AG04449 (cell line): ENCODE measurements at regions of chr9 and their contacts with region 1.

Region 1: GRCh38 chr9:20941174-20941690 is 90.2 kb downstream of the HACD4 start:
- DNase-seq: no peak
- H3K4me3 ChIP-seq: no peak overlapping the region
- CTCF ChIP-seq: peak; percentile 72

Region 2: DNA sequence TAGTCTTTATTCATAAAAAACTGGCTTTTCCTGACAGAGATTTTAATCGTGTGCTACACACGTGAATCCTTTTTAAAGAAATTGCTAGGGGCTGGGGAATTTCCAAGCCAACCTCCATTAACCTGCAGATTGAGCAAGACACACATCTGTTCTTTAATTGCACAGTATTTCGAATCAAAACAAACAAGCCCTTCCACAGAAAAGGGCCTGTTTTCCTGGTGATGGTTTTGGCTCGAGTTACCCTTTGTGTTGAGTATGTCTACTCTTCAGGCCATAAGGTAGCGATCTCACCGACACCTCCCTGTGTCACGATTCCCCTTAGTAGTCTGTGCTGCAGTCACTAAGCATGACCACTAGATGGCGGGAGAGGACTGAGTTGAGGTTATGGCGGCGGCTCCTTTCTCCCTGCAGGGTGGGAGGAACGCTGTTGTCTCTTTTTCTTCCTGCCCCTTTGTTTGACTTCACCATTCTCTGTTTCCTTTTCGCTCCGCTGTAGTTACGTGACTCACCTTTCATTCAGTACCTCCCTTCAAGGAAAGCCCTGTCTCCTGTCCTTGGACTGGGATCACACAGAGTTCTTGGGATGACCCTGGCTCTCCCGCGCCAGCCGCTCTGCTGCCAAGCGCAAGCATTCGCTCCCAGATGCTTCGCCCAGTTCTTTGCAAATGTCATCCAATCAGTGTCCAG is 1015.3 kb before region 1 on chr9:
- CTCF ChIA-PET with region 1: interaction called, 13 read pairs
- POLR2A ChIA-PET with region 1: no interaction called
- DNase-seq: peak; percentile 4
- H3K4me3 ChIP-seq: peak overlapping the region; percentile 61
- CTCF ChIP-seq: peak; percentile 98

Region 3: GRCh38 chr9:20552874-20553575 is 388.2 kb before region 1 on chr9:
- CTCF ChIA-PET with region 1: interaction called, 16 read pairs
- POLR2A ChIA-PET with region 1: no interaction called
- DNase-seq: no peak
- H3K4me3 ChIP-seq: no peak overlapping the region
- CTCF ChIP-seq: no peak

Region 4: GRCh38 chr9:20884985-20885593 is 56.1 kb before region 1 on chr9:
- CTCF ChIA-PET with region 1: interaction called, 30 read pairs
- POLR2A ChIA-PET with region 1: no interaction called
- DNase-seq: no peak
- H3K4me3 ChIP-seq: no peak overlapping the region
- CTCF ChIP-seq: peak; percentile 61

Region 5: DNA sequence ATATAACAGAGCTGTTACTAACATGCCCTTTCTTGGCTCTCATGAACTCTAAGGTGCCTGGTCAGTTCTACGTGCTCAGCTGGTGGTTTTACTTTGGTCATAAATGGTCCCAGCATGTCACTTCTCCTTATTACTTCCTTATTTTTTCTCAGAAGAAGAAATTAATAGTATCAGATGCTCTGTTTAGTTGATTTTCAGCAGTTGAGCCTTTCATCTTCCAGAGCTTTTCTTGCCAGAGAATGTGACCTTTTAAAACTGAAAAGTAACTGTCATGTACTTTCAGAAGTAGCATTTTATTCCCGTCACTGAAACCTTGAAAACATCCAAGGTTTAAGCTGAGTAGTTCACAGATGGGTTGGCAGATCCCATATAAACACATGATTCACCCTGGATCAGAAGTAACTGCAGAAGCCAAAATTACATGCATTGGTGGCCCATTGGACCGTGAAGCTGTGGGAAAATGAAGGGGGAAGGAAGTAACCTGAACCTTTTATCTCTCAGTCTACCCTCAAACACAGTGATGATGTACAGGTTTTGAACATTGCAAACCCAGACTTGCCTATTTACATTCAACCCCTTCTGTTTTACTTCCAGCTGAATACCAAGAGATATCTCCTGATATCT is 39.7 kb after region 1 on chr9:
- CTCF ChIA-PET with region 1: interaction called, 11 read pairs
- POLR2A ChIA-PET with region 1: no interaction called
- DNase-seq: peak; percentile 54
- H3K4me3 ChIP-seq: no peak overlapping the region
- CTCF ChIP-seq: no peak

Region 6: GRCh38 chr9:21265421-21266189 is 324.4 kb after region 1 on chr9:
- CTCF ChIA-PET with region 1: no interaction called
- POLR2A ChIA-PET with region 1: no interaction called
- DNase-seq: no peak
- H3K4me3 ChIP-seq: no peak overlapping the region
- CTCF ChIP-seq: no peak